A673 (cell line): ENCODE measurements at regions of chr4 and their contacts with region 1.

Region 1: DNA sequence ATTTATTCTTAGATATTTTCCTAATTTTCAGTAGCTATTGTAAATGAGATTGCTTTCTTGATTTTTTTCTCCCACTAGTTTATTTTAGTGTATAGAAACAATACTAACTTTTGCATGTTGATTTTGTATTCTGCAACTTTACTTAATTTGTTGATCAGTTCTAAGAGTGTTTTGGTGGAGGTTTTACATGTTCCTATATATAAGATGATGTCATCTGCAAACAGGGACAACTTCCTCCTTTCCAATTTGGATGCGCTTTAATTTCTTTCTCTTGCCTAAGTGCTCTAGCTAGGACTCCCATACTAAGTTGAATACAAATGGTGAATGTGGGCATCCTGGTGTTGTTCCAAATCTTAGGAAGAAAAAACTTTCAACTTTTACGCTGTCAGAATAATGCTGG is 36.8 kb downstream of the SCLT1 start:
- DNase-seq: no peak
- H3K4me3 ChIP-seq: no peak overlapping the region
- H3K27ac ChIP-seq: no peak overlapping the region
- H3K4me1 ChIP-seq: no peaks in the 10 kb centered on the region
- H3K27me3 ChIP-seq: no peaks in the 10 kb centered on the region
- CTCF ChIP-seq: no peak

Region 2: GRCh38 chr4:128725405-128726055 is 331.0 kb before region 1 on chr4:
- CTCF ChIA-PET with region 1: no interaction called
- POLR2A ChIA-PET with region 1: interaction called, 14 read pairs
- intact Hi-C with region 1: no loop called
- DNase-seq: no peak
- H3K4me3 ChIP-seq: no peak overlapping the region
- H3K27ac ChIP-seq: no peak overlapping the region
- H3K4me1 ChIP-seq: no peaks in the 10 kb centered on the region
- H3K27me3 ChIP-seq: no peaks in the 10 kb centered on the region
- CTCF ChIP-seq: no peak

Region 3: GRCh38 chr4:129682586-129682985 is 626.0 kb after region 1 on chr4:
- CTCF ChIA-PET with region 1: no interaction called
- POLR2A ChIA-PET with region 1: no interaction called
- intact Hi-C with region 1: no loop called
- DNase-seq: no peak
- H3K4me3 ChIP-seq: no peak overlapping the region
- H3K27ac ChIP-seq: no peak overlapping the region
- H3K4me1 ChIP-seq: no peaks in the 10 kb centered on the region
- H3K27me3 ChIP-seq: no peaks in the 10 kb centered on the region
- CTCF ChIP-seq: no peak